ENCODE measurements at regions of chr5 and their contacts with region 1.

Region 1: GRCh38 chr5:12413585-12413984 is 509.3 kb upstream of the CTNND2 start:
- DNase-seq: no peak
- H3K4me3 ChIP-seq: no peak overlapping the region
- H3K27ac ChIP-seq: no peak overlapping the region
- H3K4me1 ChIP-seq: no peaks in the 10 kb centered on the region
- H3K27me3 ChIP-seq: no peaks in the 10 kb centered on the region
- CTCF ChIP-seq: no peak

Region 2: DNA sequence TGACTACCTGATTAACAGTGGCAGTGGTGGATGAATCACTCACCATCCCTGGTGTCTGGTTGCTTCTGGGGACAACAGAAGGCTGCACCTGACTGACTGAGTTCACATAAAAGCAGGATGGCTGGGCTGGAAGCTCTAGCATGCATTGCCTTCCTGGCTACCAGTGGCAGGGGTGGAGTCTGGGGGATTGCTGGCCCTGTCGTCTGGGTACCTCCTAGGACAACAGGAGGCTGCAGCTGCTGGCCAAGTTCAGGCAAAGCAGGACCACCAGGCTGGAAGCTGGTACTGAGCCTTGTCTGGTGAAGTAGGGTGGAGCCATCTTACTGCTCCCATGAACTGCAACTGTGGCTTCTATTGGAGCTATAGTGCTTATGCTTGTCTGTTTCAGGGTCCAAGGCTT is 28.5 kb before region 1 on chr5:
- intact Hi-C with region 1: loop called (anchors 2 kb)
- DNase-seq: no peak
- H3K4me3 ChIP-seq: no peak overlapping the region
- H3K27ac ChIP-seq: no peak overlapping the region
- H3K4me1 ChIP-seq: no peaks in the 10 kb centered on the region
- H3K27me3 ChIP-seq: no peaks in the 10 kb centered on the region
- CTCF ChIP-seq: no peak

Region 3: DNA sequence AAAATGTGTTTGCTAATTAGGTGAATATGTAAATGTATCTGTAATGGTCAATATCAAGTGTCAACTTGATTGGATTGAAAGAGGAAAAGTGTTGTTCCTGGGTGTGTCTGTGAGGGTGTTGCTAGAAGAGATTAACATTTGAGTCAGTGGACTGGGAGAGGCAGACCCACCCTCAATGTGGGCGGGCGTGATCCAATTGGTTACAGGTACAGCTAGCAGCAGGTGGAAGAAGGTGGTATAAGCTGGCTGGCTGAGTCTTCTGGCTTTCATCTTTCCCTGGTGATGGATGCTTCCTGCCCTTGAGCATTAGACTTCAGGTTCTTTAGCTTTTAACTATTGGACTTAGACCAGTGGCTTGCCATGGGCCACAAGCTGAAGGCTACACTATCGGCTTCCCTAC is 269.7 kb after region 1 on chr5:
- intact Hi-C with region 1: no loop called
- DNase-seq: no peak
- H3K4me3 ChIP-seq: no peak overlapping the region
- H3K27ac ChIP-seq: no peak overlapping the region
- H3K4me1 ChIP-seq: no peaks in the 10 kb centered on the region
- H3K27me3 ChIP-seq: no peaks in the 10 kb centered on the region
- CTCF ChIP-seq: no peak

Measured in left ventricle myocardium inferior (tissue), 1 donor.